ENCODE measurements at regions of chr21 and their contacts with region 1.

Region 1: DNA sequence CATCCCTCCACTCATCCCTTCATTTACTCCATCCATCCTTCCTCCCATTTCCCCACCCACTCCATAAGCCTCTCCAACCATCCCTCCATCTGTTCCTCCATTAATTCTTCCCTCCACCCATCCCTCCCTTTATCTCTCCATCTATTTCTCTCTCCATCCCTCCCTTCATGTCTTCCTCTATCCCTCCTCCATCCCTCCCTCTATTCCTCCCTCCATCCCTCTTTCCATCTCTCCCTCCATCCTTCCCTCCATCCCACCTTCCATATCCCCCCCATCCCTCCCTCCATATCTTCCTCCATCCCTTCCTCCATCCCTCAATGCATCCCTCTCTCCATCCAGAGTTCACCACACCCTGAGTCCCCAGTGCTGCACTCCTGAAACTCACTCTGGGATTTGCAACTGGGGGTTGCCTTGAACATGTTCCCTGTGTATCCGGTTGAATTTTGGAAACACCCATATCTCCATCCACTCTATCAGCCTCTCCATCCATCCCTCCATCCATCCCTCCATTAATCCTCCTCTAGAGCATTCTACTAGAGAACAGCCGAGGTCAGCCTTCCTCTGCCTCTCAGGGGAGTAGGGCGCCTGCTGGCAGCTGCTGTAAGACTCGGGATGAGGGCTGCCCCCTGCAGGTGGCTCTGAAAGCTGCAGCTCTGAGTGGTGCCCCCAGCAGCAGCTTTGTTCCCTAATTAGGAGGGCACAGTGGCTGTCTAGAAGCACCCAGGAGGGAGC is 39.4 kb downstream of the ABCG1 start:
- DNase-seq: no peak
- ATAC-seq: peak; percentile 97
- H3K4me3 ChIP-seq: no peak overlapping the region
- H3K27ac ChIP-seq: no peak overlapping the region
- H3K4me1 ChIP-seq: no peaks in the 10 kb centered on the region
- H3K27me3 ChIP-seq: no peaks in the 10 kb centered on the region; a peak in 1 of 4 replicates
- CTCF ChIP-seq: peak; percentile 90 to 97 (median 90)
- EP300 ChIP-seq: no peak
- POLR2A ChIP-seq: no peak
- RAD21 ChIP-seq: peak; percentile 93

Region 2: DNA sequence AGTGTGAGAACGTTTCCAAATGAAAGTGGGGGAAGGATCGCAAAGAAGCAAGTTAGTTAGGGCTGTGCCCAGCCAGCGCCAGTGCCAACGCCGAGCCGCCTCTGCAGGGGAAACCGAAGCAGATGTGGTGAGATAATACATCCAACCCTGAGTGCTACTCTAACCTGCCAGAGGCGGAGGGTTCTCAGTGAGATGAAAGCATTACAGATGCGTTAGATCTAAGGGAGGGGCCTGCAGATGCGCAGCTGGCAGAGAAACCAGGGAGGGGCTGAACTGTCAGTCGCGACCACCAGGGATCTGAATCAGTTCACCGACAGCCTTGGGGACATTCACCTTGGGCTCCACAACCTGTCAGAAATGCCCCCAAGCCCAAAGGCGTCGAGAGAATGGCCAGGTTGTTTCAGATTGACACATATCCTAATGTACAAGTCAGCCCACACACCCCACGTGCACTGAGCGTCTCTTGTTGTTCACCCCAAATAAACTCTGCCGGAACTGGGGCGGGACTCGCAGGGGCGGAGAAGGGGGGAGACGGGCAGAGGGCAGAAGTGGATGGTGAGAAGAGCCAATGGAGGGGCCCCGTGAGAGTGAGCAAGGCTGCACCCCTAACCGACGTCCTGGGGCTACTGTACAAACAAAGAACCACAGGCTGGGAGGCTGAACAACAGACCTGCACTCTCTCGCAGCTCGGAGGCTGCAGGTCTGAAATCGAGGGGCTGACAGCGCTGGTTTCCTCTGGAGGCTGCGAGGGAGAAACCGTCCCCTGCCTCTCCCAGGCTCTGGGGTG is 195.9 kb before region 1 on chr21:
- CTCF ChIA-PET with region 1: no interaction called
- POLR2A ChIA-PET with region 1: no interaction called
- RAD21 ChIA-PET with region 1: no interaction called
- SMC1A ChIA-PET with region 1: no interaction called
- in situ Hi-C with region 1: no loop called
- intact Hi-C with region 1: no loop called
- DNase-seq: peak; percentile 82
- ATAC-seq: peak; percentile 74
- H3K4me3 ChIP-seq: peak overlapping the region; percentile 72
- H3K27ac ChIP-seq: peak overlapping the region; percentile 93
- H3K4me1 ChIP-seq: peaks cover 54% of the 10 kb centered on the region
- H3K27me3 ChIP-seq: no peaks in the 10 kb centered on the region
- CTCF ChIP-seq: no peak
- EP300 ChIP-seq: peak in 1 of 2 experiments; percentile 62; a peak in 1 of 4 replicates
- POLR2A ChIP-seq: peak; percentile 87
- RAD21 ChIP-seq: no peak

Region 3: DNA sequence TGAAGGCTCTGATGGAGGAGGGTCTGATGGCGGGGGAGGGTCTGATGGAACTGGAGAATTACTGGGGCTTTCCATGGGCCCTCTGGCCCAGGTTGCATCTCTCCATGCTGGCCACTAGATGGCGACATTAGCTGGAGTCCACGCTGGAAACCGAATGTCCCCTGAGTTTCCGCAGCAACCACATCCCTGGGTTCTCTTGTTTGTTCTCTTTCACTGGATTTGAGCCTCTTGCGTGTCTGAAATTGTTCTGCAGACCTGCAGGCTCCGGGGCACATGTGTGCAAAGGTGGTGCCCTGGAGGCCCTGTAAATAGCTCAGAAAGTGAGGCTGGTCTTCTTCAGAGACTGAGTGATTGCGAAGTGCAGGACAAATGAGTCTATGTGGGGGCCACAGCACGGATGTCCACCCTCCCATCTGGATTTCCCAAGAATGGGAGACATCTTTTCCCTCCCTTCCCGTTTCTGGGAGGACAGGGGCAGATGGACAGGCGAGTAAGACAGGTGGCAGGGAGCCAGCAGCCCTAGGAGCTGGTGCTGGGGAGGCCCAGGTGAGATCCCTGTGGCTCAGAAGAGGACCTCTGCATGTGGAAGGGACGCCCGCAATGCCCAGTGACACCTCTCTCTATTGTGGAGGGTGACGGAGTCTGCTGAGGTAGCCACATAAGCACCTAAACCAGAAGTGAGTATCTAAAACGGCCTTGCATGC is 112.6 kb before region 1 on chr21:
- CTCF ChIA-PET with region 1: interaction called, 83 read pairs
- POLR2A ChIA-PET with region 1: interaction called, 3 read pairs
- RAD21 ChIA-PET with region 1: interaction called, 68 read pairs
- SMC1A ChIA-PET with region 1: interaction called, 71 read pairs
- in situ Hi-C with region 1: no loop called
- intact Hi-C with region 1: loop called (anchors 1 kb)
- DNase-seq: peak; percentile 17
- ATAC-seq: peak; percentile 92
- H3K4me3 ChIP-seq: no peak overlapping the region
- H3K27ac ChIP-seq: no peak overlapping the region
- H3K4me1 ChIP-seq: no peaks in the 10 kb centered on the region
- H3K27me3 ChIP-seq: no peaks in the 10 kb centered on the region
- CTCF ChIP-seq: peak; percentile 90 to 96 (median 91); a peak in 5 of 6 replicates
- EP300 ChIP-seq: no peak
- POLR2A ChIP-seq: no peak
- RAD21 ChIP-seq: peak; percentile 87

Region 4: DNA sequence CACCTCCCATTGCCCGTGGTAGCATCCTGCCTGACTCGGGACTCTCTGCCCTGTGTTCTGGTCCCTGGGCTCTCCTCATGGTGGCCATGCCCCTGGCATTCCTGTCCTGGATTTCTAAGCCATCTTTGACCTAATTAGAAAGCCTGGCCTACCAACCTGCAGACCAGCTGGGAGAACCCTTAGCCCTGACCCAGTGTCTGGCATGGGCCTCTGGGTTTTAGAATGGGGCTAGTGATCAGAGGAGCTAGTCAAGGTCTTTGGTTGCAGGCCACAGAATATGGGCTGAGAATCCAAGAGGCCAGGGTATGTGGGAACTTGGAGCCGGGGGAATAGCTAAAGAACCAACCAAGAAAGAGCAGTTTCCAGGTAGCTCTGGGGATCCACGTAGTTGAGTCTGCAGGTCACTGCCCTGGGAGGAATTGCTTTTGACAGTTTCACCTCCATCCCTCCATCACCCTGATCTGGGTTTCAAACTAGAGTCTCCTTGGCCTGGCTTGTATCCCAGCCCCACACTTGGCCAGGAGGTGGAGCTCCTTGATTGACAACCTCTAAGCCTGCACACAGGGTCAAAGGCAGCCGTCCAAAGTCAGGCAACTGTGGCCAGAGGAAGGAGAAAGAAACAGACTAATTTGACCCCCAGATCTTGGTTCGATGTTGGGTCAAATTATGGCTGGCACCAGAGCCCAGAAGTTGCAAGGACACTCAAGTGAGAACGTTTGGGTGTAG is 94.1 kb before region 1 on chr21:
- CTCF ChIA-PET with region 1: interaction called, 129 read pairs
- POLR2A ChIA-PET with region 1: interaction called, 5 read pairs
- RAD21 ChIA-PET with region 1: interaction called, 105 read pairs
- SMC1A ChIA-PET with region 1: interaction called, 97 read pairs
- in situ Hi-C with region 1: no loop called
- intact Hi-C with region 1: loop called (anchors 1 kb)
- DNase-seq: no peak
- ATAC-seq: peak; percentile 99
- H3K4me3 ChIP-seq: no peak overlapping the region
- H3K27ac ChIP-seq: no peak overlapping the region
- H3K4me1 ChIP-seq: no peaks in the 10 kb centered on the region
- H3K27me3 ChIP-seq: peaks cover 2 to 3% of the 10 kb centered on the region in 2 experiments; a peak in 3 of 4 replicates
- CTCF ChIP-seq: peak; percentile 73 to 90 (median 78)
- EP300 ChIP-seq: no peak
- POLR2A ChIP-seq: no peak
- RAD21 ChIP-seq: peak; percentile 99

Region 5: DNA sequence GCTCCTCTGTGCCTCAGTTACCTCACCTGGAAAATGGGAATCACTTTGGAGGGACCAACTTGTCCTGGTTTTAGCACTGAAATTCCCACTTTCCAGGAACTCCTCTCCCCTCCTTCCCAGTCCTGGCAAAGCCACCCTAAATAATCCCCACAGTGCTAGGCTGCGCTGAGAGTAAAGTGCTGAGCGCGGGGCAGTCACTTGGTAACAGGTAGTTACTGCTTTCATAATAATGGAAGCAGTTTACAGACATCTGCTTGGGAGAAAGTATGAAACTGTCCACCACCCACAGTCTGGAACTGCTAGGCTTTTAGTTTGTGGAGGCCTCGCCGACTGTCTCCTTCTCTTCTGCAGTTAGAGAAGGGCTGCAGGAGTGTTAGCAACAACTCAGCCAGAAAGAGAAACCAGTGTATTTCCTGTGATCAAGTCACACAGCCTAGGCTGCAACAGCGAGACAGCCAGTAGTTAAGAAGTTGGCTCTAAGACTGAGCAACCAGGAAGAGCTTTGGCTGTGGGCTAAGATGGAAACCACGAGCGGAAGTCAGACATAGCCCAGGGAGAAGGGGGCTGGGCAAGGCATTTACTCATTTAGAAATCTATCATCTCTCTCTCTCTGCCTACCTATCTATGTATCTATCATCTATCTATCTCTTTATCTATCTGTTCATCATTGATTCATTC is 70.2 kb before region 1 on chr21:
- CTCF ChIA-PET with region 1: interaction called, 19 read pairs
- POLR2A ChIA-PET with region 1: interaction called, 3 read pairs
- RAD21 ChIA-PET with region 1: interaction called, 12 read pairs
- SMC1A ChIA-PET with region 1: interaction called, 12 read pairs
- in situ Hi-C with region 1: no loop called
- intact Hi-C with region 1: no loop called
- DNase-seq: peak; percentile 92
- ATAC-seq: peak; percentile 99
- H3K4me3 ChIP-seq: peak overlapping the region; percentile 29; the same call in 1 of the 2 replicates
- H3K27ac ChIP-seq: peak overlapping the region; percentile 92
- H3K4me1 ChIP-seq: peaks cover 19% of the 10 kb centered on the region
- H3K27me3 ChIP-seq: no peaks in the 10 kb centered on the region
- CTCF ChIP-seq: no peak
- EP300 ChIP-seq: no peak; a peak in 1 of 4 replicates
- POLR2A ChIP-seq: peak; percentile 72
- RAD21 ChIP-seq: no peak

Region 6: DNA sequence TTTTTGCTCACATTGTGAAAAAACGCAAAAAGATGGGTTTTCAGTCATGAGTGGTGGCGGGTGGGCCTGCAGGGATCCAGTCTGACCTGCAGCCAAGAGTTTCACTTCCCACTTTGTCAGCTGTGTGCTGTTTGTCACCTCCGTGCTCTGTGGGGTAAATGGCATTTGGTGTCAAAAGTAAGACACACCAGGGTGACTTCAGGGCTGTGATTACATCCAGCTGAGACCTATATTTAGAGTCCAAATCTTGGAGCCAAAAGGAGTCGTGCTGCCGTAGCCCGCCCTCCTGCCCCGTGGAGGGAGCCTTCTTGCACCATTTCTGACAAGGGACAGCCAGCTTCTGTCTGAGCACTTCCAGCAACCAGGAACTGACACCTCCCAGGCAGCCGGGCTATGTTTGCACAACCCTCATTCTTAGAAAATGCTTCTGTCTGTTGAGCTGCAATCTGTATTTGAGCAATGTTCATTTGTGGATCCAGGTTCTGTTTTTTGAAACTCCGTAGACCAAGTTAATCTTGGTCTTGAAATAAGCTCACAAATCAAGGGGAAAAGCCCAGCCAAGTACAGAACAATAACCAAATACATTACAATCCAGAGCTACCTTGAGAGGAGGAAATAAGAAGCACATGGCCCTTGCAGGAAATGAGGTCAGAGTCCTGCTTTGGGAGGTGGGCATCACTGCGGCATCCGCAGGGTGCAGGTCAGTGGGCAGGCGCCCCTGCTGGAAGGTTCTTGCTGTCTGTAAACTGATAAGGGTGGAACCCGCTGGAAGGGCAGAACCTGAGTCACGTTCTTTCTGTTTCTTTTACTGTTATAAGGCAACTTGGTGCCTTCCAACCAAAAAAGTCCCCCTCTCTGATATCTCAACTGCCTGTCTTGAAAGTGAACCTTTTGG is 25.0 kb before region 1 on chr21:
- CTCF ChIA-PET with region 1: interaction called, 151 read pairs
- POLR2A ChIA-PET with region 1: interaction called, 11 read pairs
- RAD21 ChIA-PET with region 1: interaction called, 60 read pairs
- SMC1A ChIA-PET with region 1: interaction called, 46 read pairs
- in situ Hi-C with region 1: no loop called
- intact Hi-C with region 1: no loop called
- DNase-seq: peak; percentile 82
- ATAC-seq: peak; percentile 71
- H3K4me3 ChIP-seq: no peak overlapping the region; the same call in 1 of the 2 replicates
- H3K27ac ChIP-seq: peak overlapping the region; percentile 84
- H3K4me1 ChIP-seq: peaks cover 69% of the 10 kb centered on the region
- H3K27me3 ChIP-seq: no peaks in the 10 kb centered on the region
- CTCF ChIP-seq: peak; percentile 37 to 47 (median 43); a peak in 4 of 6 replicates
- EP300 ChIP-seq: peak; percentile 91 to 98
- POLR2A ChIP-seq: no peak
- RAD21 ChIP-seq: 0 out of 2 replicates have a peak, but pooled peaks have one; percentile 7

Region 7: DNA sequence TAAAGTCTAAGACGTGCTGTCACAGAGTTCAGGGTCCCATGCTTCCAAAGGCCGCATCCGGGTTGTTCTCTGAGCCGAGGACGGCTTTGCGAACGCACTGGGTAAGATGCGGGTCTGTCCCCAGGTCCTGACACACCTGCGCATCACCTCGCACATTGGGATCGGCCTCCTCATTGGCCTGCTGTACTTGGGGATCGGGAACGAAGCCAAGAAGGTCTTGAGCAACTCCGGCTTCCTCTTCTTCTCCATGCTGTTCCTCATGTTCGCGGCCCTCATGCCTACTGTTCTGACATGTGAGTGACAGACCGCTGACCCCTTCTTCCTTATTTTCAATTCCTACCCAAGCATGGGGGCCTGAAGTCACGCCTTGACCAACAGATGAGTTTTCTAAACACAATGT is 31.6 kb after region 1 on chr21:
- CTCF ChIA-PET with region 1: interaction called, 25 read pairs
- POLR2A ChIA-PET with region 1: interaction called, 3 read pairs
- RAD21 ChIA-PET with region 1: interaction called, 25 read pairs
- SMC1A ChIA-PET with region 1: interaction called, 21 read pairs
- in situ Hi-C with region 1: no loop called
- intact Hi-C with region 1: no loop called
- DNase-seq: no peak
- ATAC-seq: no peak
- H3K4me3 ChIP-seq: no peak overlapping the region
- H3K27ac ChIP-seq: no peak overlapping the region
- H3K4me1 ChIP-seq: peaks cover 28% of the 10 kb centered on the region
- H3K27me3 ChIP-seq: no peaks in the 10 kb centered on the region
- CTCF ChIP-seq: no peak
- EP300 ChIP-seq: no peak
- POLR2A ChIP-seq: no peak
- RAD21 ChIP-seq: no peak